Caco-2 (cell line): ENCODE measurements at regions of chr11 and their contacts with region 1.

Region 1: DNA sequence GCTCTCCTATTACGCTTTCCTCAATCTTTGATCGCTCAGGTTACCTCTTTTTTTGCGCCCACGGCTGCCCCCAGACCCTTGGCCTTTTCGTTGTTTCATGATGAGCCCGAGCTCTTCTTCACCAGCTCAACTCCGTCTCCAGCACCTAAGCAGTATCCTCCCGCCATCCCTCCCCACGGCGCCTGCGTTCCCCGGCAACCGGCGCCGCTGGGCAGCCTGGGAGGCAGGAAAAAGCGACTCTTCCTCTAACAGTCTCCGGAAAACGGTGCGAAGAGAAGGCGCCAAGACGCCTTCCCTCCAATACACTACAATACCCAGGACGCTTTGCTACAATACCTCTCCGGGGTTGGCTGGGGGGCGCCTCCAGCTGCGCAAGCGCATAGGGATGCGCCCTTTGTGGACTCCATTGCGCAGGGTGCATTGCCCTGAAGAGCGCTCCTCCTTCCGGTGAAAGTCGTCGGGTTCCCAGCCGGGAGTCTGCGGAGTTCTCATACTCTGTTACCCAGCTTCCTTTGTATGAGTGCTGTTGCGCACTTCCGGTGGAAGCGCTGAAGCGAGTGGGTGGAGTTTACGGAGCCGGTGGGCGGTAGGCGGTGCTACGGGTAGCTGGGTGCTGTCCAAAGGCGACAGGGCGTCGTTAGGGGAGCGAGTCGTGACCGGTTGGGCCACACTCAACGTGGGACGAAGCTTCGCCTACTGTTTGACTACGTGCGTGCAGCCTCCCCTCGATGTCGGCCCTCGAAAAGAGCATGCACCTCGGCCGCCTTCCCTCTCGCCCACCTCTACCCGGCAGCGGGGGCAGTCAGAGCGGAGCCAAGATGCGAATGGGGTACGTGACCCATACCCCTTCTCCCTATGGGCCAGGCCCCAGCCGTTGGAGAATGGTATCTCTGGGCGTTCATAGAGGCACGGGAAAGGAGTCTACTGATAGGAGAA is at the starts of genes C2CD3 and PPME1:
- DNase-seq: peak; percentile 100
- H3K4me3 ChIP-seq: peak within 1 kb of the TSS; percentile 75
- H3K4me3 Mint-ChIP-seq: no peak within 1 kb of the TSS
- H3K27ac Mint-ChIP-seq: no peak within 1 kb of the TSS
- H3K4me1 ChIP-seq: peaks cover 32% of the 10 kb centered on the region
- H3K4me1 Mint-ChIP-seq: peaks cover 6% of the 10 kb centered on the region
- H3K27me3 ChIP-seq: no peaks in the 10 kb centered on the region
- H3K27me3 Mint-ChIP-seq: no peaks in the 10 kb centered on the region
- CTCF ChIP-seq: peak; percentile 59 to 63
- total RNA-seq, gene C2CD3: 47.0 and 47.5 TPM in 2 replicates
- total RNA-seq, gene PPME1: 109 and 114 TPM in 2 replicates

Region 2: GRCh38 chr11:73876424-73877300 is 294.3 kb before region 1 on chr11 and contains the starts of genes COA4 and PAAF1:
- CTCF ChIA-PET with region 1: no interaction called
- POLR2A ChIA-PET with region 1: no interaction called
- intact Hi-C with region 1: loop called (anchors 2 kb)
- DNase-seq: peak; percentile 100
- H3K4me3 ChIP-seq: peak within 1 kb of the TSS; percentile 62
- H3K4me3 Mint-ChIP-seq: peak within 1 kb of the TSS; percentile 91
- H3K27ac Mint-ChIP-seq: peak within 1 kb of the TSS; percentile 95
- H3K4me1 ChIP-seq: peaks cover 23% of the 10 kb centered on the region
- H3K4me1 Mint-ChIP-seq: peaks cover 6% of the 10 kb centered on the region
- H3K27me3 ChIP-seq: no peaks in the 10 kb centered on the region
- H3K27me3 Mint-ChIP-seq: no peaks in the 10 kb centered on the region
- CTCF ChIP-seq: no peak
- total RNA-seq, gene COA4: 127 and 137 TPM in 2 replicates
- total RNA-seq, gene PAAF1: 51.6 and 53.4 TPM in 2 replicates

Region 3: GRCh38 chr11:73982969-73983740 is 187.8 kb before region 1 on chr11:
- CTCF ChIA-PET with region 1: interaction called, 13 read pairs
- POLR2A ChIA-PET with region 1: interaction called, 42 read pairs
- intact Hi-C with region 1: loop called (anchors 1 kb)
- DNase-seq: peak; percentile 100
- H3K4me3 ChIP-seq: peak overlapping the region; percentile 55
- H3K4me3 Mint-ChIP-seq: peak overlapping the region; percentile 91
- H3K27ac Mint-ChIP-seq: peak overlapping the region; percentile 95
- H3K4me1 ChIP-seq: peaks cover 15% of the 10 kb centered on the region
- H3K4me1 Mint-ChIP-seq: peaks cover 7% of the 10 kb centered on the region
- H3K27me3 ChIP-seq: no peaks in the 10 kb centered on the region
- H3K27me3 Mint-ChIP-seq: no peaks in the 10 kb centered on the region
- CTCF ChIP-seq: no peak

Region 4: DNA sequence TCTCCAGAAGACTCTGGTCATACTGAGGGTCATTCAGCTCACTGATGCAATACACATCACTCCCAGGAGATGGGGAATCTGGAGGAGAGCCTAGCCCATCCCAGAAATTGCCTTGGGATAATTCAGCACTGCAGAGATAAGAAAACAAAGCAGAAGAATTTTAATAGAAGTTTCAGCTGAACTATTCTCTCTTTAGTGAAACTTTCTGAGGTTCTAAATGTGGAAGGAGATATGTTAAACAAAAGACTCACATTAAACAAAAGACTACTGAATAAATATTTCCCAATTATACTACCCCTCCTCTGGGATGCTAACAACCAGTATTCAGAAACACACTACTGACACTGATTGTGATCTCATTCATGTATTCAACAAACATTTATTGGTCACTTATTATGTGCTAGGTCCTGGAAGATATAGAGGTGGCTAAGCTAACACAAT is 47.9 kb before region 1 on chr11:
- CTCF ChIA-PET with region 1: interaction called, 15 read pairs
- POLR2A ChIA-PET with region 1: interaction called, 21 read pairs
- intact Hi-C with region 1: loop called (anchors 1 kb)
- DNase-seq: peak; percentile 79 to 84
- H3K4me3 ChIP-seq: no peak overlapping the region
- H3K4me3 Mint-ChIP-seq: peak overlapping the region; percentile 4
- H3K27ac Mint-ChIP-seq: peak overlapping the region; percentile 52
- H3K4me1 ChIP-seq: peaks cover 35% of the 10 kb centered on the region
- H3K4me1 Mint-ChIP-seq: peaks cover 43% of the 10 kb centered on the region
- H3K27me3 ChIP-seq: no peaks in the 10 kb centered on the region
- H3K27me3 Mint-ChIP-seq: no peaks in the 10 kb centered on the region
- CTCF ChIP-seq: peak; percentile 13 to 62

Region 5: GRCh38 chr11:74154621-74155281 is 16.2 kb before region 1 on chr11:
- CTCF ChIA-PET with region 1: interaction called, 12 read pairs
- POLR2A ChIA-PET with region 1: no interaction called
- intact Hi-C with region 1: no loop called
- DNase-seq: no peak
- H3K4me3 ChIP-seq: no peak overlapping the region
- H3K4me3 Mint-ChIP-seq: no peak overlapping the region
- H3K27ac Mint-ChIP-seq: no peak overlapping the region
- H3K4me1 ChIP-seq: no peaks in the 10 kb centered on the region
- H3K4me1 Mint-ChIP-seq: peaks cover 6% of the 10 kb centered on the region
- H3K27me3 ChIP-seq: no peaks in the 10 kb centered on the region
- H3K27me3 Mint-ChIP-seq: no peaks in the 10 kb centered on the region
- CTCF ChIP-seq: no peak

Region 6: GRCh38 chr11:74248469-74248868 is 77.5 kb after region 1 on chr11:
- CTCF ChIA-PET with region 1: no interaction called
- POLR2A ChIA-PET with region 1: no interaction called
- intact Hi-C with region 1: no loop called
- DNase-seq: no peak
- H3K4me3 ChIP-seq: no peak overlapping the region
- H3K4me3 Mint-ChIP-seq: no peak overlapping the region
- H3K27ac Mint-ChIP-seq: no peak overlapping the region
- H3K4me1 ChIP-seq: no peaks in the 10 kb centered on the region
- H3K4me1 Mint-ChIP-seq: no peaks in the 10 kb centered on the region
- H3K27me3 ChIP-seq: no peaks in the 10 kb centered on the region
- H3K27me3 Mint-ChIP-seq: no peaks in the 10 kb centered on the region
- CTCF ChIP-seq: no peak